Lower lobe of right lung (tissue), 2 donors: ENCODE measurements at regions of chr12 and their contacts with region 1.

Region 1: GRCh38 chr12:121334513-121335343 is 17.5 kb downstream of the ANAPC5 start:
- DNase-seq: no peak
- ATAC-seq: peak; percentile 83 to 90
- H3K4me3 ChIP-seq: no peak overlapping the region
- H3K27ac ChIP-seq: no peak overlapping the region
- H3K4me1 ChIP-seq: no peaks in the 10 kb centered on the region
- H3K27me3 ChIP-seq: no peaks in the 10 kb centered on the region
- CTCF ChIP-seq: peak; percentile 86

Region 2: GRCh38 chr12:121260091-121260490 is 74.6 kb before region 1 on chr12:
- intact Hi-C with region 1: no loop called
- DNase-seq: no peak
- ATAC-seq: no peak
- H3K4me3 ChIP-seq: no peak overlapping the region
- H3K27ac ChIP-seq: no peak overlapping the region
- H3K4me1 ChIP-seq: no peaks in the 10 kb centered on the region
- H3K27me3 ChIP-seq: no peaks in the 10 kb centered on the region
- CTCF ChIP-seq: no peak

Region 3: GRCh38 chr12:121443193-121443870 is 108.6 kb after region 1 on chr12:
- intact Hi-C with region 1: loop called (anchors 5 kb)
- DNase-seq: peak; percentile 84
- ATAC-seq: peak; percentile 93 to 94
- H3K4me3 ChIP-seq: no peak overlapping the region
- H3K27ac ChIP-seq: no peak overlapping the region
- H3K4me1 ChIP-seq: no peaks in the 10 kb centered on the region
- H3K27me3 ChIP-seq: no peaks in the 10 kb centered on the region
- CTCF ChIP-seq: peak; percentile 86